ENCODE measurements at regions of chr7 and their contacts with region 1.

Region 1: GRCh38 chr7:26083113-26083512 is 68.9 kb upstream of the NFE2L3 start:
- DNase-seq: no peak
- H3K4me3 ChIP-seq: no peak overlapping the region
- H3K4me3 Mint-ChIP-seq: no peak overlapping the region
- H3K27ac Mint-ChIP-seq: no peak overlapping the region
- H3K4me1 ChIP-seq: peaks cover 62% of the 10 kb centered on the region
- H3K4me1 Mint-ChIP-seq: peaks cover 50% of the 10 kb centered on the region
- H3K27me3 ChIP-seq: no peaks in the 10 kb centered on the region
- H3K27me3 Mint-ChIP-seq: no peaks in the 10 kb centered on the region
- CTCF ChIP-seq: no peak

Region 2: DNA sequence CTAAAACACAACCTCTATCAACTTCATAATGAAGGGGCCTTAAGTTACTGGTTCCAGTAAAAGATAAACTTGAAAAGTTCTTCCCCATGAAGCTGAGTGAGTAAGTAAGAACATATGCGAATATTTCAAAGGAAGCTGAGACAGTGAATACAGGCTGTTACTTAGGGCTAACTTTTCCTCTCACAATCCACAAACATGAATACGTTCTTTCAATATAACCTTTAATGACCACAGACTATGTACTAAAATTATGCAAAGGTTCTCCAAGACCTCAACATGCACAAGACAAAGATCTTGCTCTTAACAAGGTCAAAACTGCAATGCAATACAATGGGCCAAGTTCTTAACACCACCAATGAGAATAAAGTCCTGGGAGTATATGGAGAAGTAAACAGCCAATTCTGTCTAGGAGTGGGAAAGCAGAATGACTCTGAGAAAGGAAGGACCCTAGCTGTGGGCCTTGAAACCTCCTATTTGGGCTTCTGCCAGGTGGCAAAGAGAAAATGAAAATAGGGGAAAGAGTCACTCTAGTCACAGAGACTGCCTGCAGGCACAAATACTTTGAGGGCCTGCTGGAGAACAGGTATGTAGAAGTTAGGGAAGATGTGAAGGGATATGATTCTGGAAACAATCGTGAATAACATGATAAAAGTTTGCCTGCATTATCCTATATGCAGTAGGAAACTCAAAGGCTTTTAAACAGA is 1146.8 kb before region 1 on chr7:
- CTCF ChIA-PET with region 1: no interaction called
- POLR2A ChIA-PET with region 1: no interaction called
- intact Hi-C with region 1: no loop called
- DNase-seq: no peak
- H3K4me3 ChIP-seq: no peak overlapping the region
- H3K4me3 Mint-ChIP-seq: no peak overlapping the region
- H3K27ac Mint-ChIP-seq: no peak overlapping the region
- H3K4me1 ChIP-seq: no peaks in the 10 kb centered on the region
- H3K4me1 Mint-ChIP-seq: peaks cover 10% of the 10 kb centered on the region
- H3K27me3 ChIP-seq: no peaks in the 10 kb centered on the region
- H3K27me3 Mint-ChIP-seq: no peaks in the 10 kb centered on the region
- CTCF ChIP-seq: no peak

Region 3: DNA sequence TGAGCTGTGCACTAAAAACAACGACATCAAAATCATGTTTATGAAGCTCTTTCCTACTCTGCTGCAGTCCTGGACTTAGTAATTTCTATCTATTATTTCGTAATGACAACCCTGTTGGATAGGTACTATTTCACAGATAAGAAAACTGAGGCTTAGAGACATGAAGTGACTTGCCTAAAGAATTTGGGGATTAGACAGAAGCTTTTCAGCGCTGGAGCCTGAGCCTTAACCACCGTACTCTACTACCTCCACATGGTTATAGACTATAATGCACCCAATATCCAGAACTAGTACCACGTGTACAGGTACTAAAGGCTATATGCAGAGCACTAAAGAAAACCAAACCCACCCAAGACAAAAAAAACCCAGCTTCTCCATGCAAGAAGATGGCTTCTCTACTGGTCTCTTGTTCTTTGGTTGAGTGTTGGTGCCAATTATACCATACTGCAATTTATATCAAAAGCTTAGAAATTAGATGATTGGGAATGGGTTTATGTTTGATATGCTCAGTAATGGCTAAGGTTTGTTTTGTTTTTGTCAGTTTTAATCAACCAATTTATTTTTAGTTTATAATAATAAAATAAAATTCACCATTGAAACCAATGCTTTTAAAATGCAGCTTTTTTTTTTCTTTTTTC is 202.0 kb after region 1 on chr7:
- CTCF ChIA-PET with region 1: interaction called, 3 read pairs
- POLR2A ChIA-PET with region 1: interaction called, 4 read pairs
- intact Hi-C with region 1: loop called (anchors 1 kb)
- DNase-seq: peak in 1 of 2 experiments; percentile 55
- H3K4me3 ChIP-seq: no peak overlapping the region
- H3K4me3 Mint-ChIP-seq: no peak overlapping the region
- H3K27ac Mint-ChIP-seq: no peak overlapping the region
- H3K4me1 ChIP-seq: no peaks in the 10 kb centered on the region
- H3K4me1 Mint-ChIP-seq: no peaks in the 10 kb centered on the region
- H3K27me3 ChIP-seq: no peaks in the 10 kb centered on the region
- H3K27me3 Mint-ChIP-seq: no peaks in the 10 kb centered on the region
- CTCF ChIP-seq: peak; percentile 35 to 43

Measured in Caco-2 (cell line).